ENCODE measurements at regions of chr1 and their contacts with region 1.

Region 1: DNA sequence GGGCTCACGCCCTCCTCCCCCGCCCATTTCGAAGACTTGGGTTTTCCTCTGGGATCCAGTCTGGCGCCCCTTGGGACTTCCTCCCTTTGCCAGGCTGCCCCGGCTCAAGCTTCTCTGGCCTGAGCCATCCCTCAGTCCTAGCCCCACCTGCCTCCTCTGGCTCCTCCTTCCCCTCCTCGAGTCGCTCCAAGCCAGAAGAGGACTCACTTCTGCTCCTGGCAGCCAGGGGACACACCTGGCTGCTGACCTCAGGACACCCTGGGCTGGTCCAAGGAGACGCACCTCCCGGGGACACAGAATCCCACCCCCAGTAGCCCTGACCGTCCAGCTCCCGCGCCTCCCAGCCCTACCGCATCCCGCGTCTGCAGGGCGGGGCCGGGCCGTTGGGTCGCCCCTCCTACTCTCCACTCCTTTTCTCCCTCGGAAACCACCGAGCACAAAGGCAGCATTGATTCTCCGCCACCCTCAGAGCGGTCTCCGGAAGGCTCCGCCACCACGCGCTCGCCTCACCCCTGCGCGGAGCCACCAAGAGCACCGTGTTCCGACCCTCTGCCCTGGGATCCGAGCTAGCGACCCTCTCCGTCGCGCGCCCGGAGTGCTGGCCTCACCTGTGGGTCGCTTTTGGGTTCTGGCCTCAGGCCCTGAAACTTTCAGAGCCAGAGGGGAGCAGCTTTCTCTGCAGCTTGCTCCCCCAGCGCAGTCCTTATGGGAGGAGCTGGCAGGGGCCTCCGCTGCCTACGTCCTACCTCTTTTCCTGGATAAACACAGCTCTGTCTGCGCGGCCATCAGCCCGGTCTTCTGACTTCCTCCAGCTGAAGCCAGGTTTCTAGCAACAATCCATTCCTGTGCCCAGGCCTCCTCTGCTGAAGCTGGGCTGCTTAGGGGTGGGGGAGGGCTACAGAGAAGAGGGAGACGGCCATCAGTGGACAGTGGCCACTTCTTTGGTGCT is at the start of gene C2CD4D:
- DNase-seq: peak; percentile 84
- ATAC-seq: peak; percentile 76
- H3K4me3 Mint-ChIP-seq: peak within 1 kb of the TSS; percentile 72
- H3K27ac Mint-ChIP-seq: peak within 1 kb of the TSS; percentile 86
- H3K4me1 Mint-ChIP-seq: peaks cover 37% of the 10 kb centered on the region
- H3K27me3 Mint-ChIP-seq: no peaks in the 10 kb centered on the region
- total RNA-seq, gene C2CD4D: 2.1 to 2.4 TPM

Region 2: GRCh38 chr1:151443846-151444782 is 395.6 kb before region 1 on chr1:
- CTCF ChIA-PET with region 1: interaction called, 3 read pairs
- POLR2A ChIA-PET with region 1: interaction called, 3 read pairs
- intact Hi-C with region 1: loop called (anchors 2 to 5 kb)
- DNase-seq: peak; percentile 80
- ATAC-seq: peak; percentile 96
- H3K4me3 Mint-ChIP-seq: no peak overlapping the region
- H3K27ac Mint-ChIP-seq: peak overlapping the region; percentile 42
- H3K4me1 Mint-ChIP-seq: peaks cover 59% of the 10 kb centered on the region
- H3K27me3 Mint-ChIP-seq: no peaks in the 10 kb centered on the region

Region 3: DNA sequence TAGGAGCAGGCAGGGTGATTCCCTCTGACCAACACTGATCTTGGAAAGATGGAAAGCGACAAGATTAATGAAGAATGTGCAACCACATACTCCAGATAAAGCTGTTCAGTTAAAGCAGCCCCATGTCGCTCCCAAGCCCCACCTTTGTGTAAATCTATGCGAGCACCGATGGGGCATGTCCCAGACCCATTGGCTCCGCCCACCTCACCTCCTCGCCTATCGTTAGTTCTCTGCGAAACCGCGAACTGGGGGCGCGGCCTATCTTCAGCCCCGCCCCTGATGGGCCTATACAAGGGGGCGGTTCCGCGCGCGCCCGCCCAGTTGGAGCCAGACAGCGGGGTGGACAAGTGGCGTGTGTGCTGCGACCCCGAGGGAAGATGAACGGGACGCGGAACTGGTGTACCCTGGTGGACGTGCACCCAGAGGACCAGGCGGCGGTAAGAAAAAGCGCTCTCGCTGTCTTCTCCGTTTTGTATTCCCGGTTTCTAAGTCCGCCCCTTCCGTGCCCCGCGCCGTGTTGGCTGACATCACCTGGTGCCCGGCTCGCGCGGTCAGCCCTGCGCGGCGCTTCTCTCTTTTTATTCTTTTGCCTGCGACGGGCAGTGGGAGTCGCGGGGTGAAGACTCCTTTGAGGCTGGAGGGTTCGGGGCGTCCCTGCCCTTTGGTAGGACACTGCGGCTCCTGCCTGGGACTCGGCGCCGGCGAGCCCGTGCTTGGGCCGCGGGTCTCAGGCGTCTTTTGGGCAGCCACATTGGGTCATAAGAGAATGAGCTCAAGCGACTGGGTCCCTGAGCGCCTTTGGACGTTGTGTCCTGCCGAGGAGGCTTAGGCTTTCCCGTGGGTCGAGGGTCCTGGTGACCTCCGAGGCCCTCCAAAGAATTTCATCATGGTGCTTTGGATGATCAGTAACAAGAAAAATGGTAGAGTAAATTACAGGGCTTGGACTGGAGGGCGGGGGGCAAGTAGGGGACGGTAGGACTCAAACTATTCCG is 299.4 kb before region 1 on chr1 and contains the start of gene TUFT1:
- CTCF ChIA-PET with region 1: interaction called, 4 read pairs
- POLR2A ChIA-PET with region 1: no interaction called
- intact Hi-C with region 1: loop called (anchors 2 kb)
- DNase-seq: peak; percentile 97
- ATAC-seq: peak; percentile 99
- H3K4me3 Mint-ChIP-seq: peak within 1 kb of the TSS; percentile 90
- H3K27ac Mint-ChIP-seq: peak within 1 kb of the TSS; percentile 69
- H3K4me1 Mint-ChIP-seq: peaks cover 21% of the 10 kb centered on the region
- H3K27me3 Mint-ChIP-seq: peaks cover 7% of the 10 kb centered on the region
- total RNA-seq, gene TUFT1: 3.2 TPM

Region 4: DNA sequence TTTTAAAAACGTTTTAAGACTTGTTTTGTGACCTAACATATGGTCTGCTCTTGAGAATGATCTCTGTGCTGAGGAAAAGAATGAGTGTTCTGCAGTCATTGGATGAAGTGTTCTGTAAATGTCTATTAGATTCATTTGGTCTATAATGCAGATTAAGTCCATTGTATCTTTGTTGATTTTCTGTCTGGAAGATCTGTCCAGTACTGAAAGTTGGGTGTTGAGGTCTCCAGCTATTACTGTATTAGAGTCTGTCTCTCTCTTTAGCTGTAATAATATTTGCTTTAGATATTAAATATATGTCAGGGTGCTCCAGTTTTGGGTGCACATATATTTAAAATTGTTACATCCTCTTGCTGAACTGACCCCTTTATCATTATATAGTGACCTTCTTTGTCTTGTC is 166.3 kb before region 1 on chr1:
- CTCF ChIA-PET with region 1: no interaction called
- POLR2A ChIA-PET with region 1: no interaction called
- intact Hi-C with region 1: no loop called
- DNase-seq: no peak
- ATAC-seq: no peak
- H3K4me3 Mint-ChIP-seq: no peak overlapping the region
- H3K27ac Mint-ChIP-seq: no peak overlapping the region
- H3K4me1 Mint-ChIP-seq: peaks cover 2% of the 10 kb centered on the region
- H3K27me3 Mint-ChIP-seq: no peaks in the 10 kb centered on the region

Region 5: DNA sequence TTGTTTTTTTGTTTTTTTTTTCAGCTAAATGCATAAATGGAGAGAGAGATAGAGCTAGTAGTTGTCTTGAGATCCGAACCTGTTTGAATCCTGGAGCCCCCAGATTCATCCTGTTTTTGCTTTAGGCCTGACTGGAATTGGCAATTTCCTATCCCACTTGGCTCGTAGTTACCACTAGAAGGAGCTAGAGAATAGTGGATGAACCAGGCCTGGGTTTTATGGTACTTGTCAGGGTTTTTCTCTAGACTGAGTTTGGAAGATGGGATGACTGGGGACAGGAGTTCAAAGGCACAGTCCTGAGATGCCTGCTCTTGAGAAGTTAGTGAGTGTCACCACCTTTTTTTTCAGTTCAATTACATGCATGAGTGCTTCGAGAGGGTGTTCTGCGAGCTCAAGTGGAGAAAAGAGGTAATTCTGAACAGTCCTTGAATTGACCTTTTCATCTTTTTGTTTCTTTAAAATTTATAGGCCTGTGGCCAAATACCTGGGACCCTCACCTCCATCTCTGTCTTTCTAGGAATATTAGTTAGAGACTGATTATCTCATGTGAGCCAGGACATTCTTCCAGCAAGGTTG is 146.6 kb before region 1 on chr1:
- CTCF ChIA-PET with region 1: interaction called, 5 read pairs
- POLR2A ChIA-PET with region 1: interaction called, 3 read pairs
- intact Hi-C with region 1: loop called in 1 of 2 experiments (anchors 1 kb)
- DNase-seq: no peak
- ATAC-seq: no peak
- H3K4me3 Mint-ChIP-seq: no peak overlapping the region
- H3K27ac Mint-ChIP-seq: no peak overlapping the region
- H3K4me1 Mint-ChIP-seq: no peaks in the 10 kb centered on the region
- H3K27me3 Mint-ChIP-seq: no peaks in the 10 kb centered on the region

Region 6: GRCh38 chr1:151739590-151740375 is 99.9 kb before region 1 on chr1:
- CTCF ChIA-PET with region 1: interaction called, 12 read pairs
- POLR2A ChIA-PET with region 1: no interaction called
- intact Hi-C with region 1: loop called in 1 of 2 experiments (anchors 1 kb)
- DNase-seq: no peak
- ATAC-seq: no peak
- H3K4me3 Mint-ChIP-seq: no peak overlapping the region
- H3K27ac Mint-ChIP-seq: no peak overlapping the region
- H3K4me1 Mint-ChIP-seq: no peaks in the 10 kb centered on the region
- H3K27me3 Mint-ChIP-seq: peaks cover 1% of the 10 kb centered on the region

Region 7: GRCh38 chr1:151909150-151910149 is 69.7 kb after region 1 on chr1 and contains the start of gene THEM4:
- CTCF ChIA-PET with region 1: interaction called, 3 read pairs
- POLR2A ChIA-PET with region 1: no interaction called
- intact Hi-C with region 1: loop called (anchors 1 to 2 kb)
- DNase-seq: peak; percentile 98
- ATAC-seq: peak; percentile 93
- H3K4me3 Mint-ChIP-seq: peak within 1 kb of the TSS; percentile 82
- H3K27ac Mint-ChIP-seq: peak within 1 kb of the TSS; percentile 91
- H3K4me1 Mint-ChIP-seq: peaks cover 42% of the 10 kb centered on the region
- H3K27me3 Mint-ChIP-seq: no peaks in the 10 kb centered on the region
- total RNA-seq, gene THEM4: 23.9 to 26.0 TPM

Measured in activated CD4-positive, alpha-beta T cell treated with anti-CD3 and anti-CD28 coated beads for 36 hours (primary cell).